ENCODE measurements at regions of chr2 and their contacts with region 1.

Region 1: DNA sequence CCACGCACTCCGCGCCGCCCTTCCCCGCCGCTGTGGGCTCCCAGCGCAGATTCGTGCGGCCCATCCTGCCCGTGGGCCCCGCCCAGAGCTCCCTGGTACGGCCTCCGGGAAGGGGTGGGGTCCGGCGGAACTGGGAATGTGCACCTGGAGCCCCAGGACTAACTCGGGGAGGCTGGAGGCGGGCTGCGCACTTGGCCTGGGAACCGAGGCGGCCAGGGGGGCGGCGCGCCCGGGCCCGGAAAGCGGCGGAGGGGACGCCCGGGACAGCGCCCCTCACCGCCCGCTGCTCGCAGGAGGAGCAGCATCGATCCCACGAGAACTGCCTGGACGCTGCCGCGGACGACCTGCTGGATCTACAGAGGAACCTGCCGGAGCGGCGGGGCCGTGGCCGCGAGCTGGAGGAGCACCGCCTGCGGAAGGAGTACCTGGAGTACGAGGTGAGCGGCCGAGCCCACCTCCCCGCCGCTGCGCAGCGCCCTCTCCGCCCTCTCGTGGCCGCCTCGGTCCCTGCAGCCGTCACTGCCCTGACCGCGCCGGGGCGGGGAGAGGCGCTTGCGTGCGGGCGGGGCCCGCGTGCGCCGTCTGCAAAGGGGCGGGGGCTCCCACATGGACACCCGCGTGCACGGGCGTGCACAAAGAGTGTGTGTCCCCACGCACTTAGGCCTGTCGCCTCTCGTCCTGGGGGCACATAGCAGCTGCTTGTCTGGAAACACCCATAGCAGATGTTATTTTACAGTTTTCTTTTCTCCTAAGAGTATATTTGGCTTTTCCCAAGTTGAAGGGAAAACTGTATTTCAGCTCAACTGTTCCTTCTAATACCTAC is 25.2 kb downstream of the PSD4 start:
- DNase-seq: peak; percentile 94
- H3K4me3 Mint-ChIP-seq: no peak overlapping the region
- H3K27ac Mint-ChIP-seq: peak overlapping the region; percentile 82
- H3K4me1 Mint-ChIP-seq: peaks cover 38% of the 10 kb centered on the region
- H3K27me3 Mint-ChIP-seq: no peaks in the 10 kb centered on the region

Region 2: DNA sequence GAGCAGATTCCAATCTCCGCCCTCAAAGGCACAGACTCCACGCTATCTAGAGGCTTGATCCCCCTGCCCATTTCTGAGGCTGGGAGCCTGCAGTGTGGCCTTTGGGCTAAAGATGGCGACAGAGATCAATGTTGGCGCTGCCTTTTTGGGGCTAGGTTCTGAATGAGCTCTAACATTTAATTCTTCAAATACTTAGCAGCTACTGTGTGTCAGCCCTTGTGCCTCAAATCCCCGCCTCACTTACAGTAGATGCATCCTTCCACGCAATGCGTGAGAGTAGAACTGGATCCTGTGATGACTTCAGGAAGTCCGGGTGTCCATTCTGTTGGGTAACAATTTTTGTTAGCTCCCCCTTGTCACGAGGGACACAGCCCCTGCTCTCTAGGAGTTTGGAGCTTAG is 118.9 kb before region 1 on chr2:
- intact Hi-C with region 1: loop called (anchors 2 kb)
- DNase-seq: peak; percentile 88
- H3K4me3 Mint-ChIP-seq: no peak overlapping the region
- H3K27ac Mint-ChIP-seq: no peak overlapping the region
- H3K4me1 Mint-ChIP-seq: peaks cover 29% of the 10 kb centered on the region
- H3K27me3 Mint-ChIP-seq: peaks cover 15% of the 10 kb centered on the region

Region 3: DNA sequence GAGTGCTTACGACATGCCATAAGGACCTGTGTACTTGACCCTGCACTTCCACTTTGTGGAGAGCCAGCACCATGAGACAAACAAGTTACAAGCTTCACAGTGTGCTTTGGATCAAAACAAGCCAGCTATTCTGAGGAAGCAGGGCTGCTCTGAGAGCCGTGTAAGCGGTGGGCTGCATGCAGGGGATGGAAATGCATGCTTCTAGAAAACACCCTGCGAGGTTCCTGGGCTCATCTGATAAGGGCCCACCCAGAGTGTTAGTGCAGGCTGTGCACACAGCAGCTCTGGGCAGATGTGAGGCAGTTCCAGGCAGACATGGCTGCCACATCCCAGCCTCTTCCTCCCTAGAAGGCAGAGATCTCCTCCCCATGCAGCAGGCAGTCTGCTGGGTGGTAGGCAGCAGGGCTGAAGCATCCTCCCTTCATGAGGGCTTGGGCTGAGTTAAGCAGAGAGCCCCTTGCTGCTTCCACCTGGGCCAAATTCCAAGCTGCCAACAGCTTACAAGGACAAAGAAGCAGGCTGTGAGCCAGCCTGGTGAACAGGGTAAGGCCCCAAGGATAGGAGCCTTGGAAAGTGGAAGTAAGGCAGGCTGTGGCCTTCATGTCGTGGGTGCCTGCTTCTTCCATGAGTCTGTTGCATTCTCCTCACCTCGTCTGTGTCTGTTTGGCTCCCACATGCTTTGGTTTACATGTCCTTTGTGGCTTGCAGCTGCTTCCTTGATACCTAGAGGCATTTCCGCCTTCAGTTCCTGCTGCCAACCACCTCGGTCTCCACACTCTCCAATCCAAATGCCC is 17.5 kb before region 1 on chr2:
- intact Hi-C with region 1: loop called (anchors 2 kb)
- DNase-seq: no peak
- H3K4me3 Mint-ChIP-seq: peak overlapping the region; percentile 88
- H3K27ac Mint-ChIP-seq: peak overlapping the region; percentile 88
- H3K4me1 Mint-ChIP-seq: peaks cover 80% of the 10 kb centered on the region
- H3K27me3 Mint-ChIP-seq: no peaks in the 10 kb centered on the region

Region 4: DNA sequence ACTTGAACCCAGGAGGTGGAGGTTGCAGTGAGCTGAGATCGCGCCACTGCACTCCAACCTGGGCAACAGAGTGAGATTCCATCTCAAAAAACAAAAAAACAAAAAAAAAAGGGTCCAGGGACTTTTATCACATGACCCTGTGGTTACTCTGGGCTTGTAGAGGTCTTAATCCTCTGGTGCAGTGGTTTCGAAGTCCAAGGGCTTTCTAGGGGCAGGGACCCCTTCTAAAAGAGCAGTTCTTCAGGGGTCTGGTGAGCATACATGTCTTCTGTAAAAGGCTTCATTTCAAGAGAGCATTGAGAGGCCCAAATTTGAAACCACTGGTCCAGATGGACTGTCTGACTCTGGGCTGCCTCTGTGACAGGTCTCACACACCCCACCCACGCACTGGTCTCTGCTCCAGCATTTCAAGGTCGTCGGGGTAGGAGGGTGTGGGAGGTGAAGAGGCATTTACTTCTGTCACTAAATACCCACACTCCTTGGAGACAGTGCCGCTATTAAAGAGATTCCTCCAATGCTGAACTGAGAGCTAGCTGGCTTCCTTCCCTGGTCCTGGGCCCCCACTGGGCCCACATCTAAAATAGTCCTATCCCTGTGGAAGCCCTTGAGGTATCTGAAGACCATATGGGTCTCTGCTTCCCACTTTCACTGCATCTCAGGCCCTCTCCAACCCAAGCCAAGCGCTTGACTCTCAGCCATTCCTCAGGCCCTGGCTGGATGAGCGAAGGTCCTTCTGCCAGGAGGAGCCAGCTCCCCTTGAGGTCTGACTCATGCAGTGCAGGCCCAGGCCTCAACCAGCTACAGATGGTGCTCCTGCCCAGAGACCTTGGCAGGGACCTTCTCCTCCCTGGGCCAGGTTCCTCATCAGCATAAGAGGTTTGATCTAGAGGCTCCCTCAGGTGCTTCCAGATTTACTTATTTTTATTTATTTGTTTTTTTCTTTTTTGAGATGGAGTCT is 34.9 kb after region 1 on chr2:
- intact Hi-C with region 1: loop called (anchors 5 kb)
- DNase-seq: no peak
- H3K4me3 Mint-ChIP-seq: no peak overlapping the region
- H3K27ac Mint-ChIP-seq: peak overlapping the region; percentile 15
- H3K4me1 Mint-ChIP-seq: peaks cover 25% of the 10 kb centered on the region
- H3K27me3 Mint-ChIP-seq: no peaks in the 10 kb centered on the region

Region 5: DNA sequence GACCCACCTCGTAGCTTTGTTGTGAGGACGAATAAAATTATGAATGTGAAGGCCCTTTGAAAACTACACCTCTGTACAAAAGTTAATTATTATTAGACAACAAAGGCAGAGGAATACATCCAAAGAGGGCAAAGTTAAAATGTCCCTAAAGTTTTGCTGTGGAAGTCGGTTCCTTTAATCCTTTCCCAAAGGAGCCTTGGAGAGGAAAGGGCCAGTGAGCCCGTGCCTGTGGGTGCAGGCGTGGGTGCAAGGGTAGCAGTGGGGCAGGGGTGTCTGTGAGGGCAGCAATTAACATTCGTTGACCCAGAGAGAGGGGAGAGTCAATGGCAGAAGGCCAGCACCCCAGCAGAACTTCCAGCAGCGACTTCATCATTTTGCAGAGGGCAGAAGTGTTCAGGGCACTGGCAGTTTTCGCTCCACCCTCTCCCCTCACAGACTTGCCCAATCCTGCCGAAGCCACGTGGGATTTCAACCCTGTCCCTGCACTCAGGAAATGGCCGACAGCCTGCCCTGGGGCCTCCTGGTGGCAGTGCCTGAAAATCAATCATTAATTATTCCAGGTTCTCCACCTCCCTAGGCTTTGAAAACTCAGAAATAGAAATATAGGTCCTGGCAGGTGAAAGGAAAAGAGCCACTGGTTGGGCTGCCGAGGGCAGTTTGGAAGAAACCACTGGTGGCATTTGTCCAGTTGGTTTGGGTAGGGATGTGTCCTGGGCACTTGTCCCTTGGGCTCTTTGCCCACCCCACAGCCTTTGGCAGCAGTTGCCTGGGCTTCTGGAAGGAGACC is 83.9 kb after region 1 on chr2:
- intact Hi-C with region 1: no loop called
- DNase-seq: no peak
- H3K4me3 Mint-ChIP-seq: no peak overlapping the region
- H3K27ac Mint-ChIP-seq: no peak overlapping the region
- H3K4me1 Mint-ChIP-seq: no peaks in the 10 kb centered on the region
- H3K27me3 Mint-ChIP-seq: peaks cover 58% of the 10 kb centered on the region